ENCODE measurements at regions of chr6 and their contacts with region 1.

Region 1: DNA sequence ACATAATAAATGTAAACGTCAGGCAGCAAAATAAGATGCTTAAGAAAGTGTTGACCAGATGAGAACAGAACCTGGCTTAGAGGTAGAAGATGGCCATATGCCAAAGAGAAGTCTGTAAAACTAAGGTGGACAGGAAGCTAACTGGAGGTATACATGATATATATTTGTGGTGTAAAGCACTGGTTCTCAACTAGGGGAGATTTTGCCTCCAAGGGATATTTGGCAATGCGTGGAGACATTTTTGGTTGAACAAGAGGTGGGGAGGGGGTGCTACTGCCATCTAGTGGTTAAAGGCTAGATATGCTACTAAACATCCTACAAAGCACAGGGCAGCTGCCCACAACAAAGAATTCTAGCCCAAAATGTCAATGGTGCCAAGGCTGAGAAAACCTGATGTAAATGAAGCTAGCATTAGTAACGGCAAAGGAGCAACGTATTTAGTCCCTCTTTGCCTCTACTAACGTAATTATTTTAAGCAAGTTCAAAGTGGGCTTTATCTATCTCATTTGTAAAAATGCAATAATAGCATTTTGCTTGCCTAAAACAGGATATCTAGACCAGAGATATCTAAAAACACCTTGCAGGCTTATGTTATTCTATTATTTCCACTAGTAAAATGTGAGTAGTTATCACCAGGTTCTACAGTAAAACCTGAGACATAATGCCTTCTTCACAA is 182.6 kb downstream of the RNGTT start:
- DNase-seq: peak; percentile 85
- H3K4me3 Mint-ChIP-seq: no peak overlapping the region
- H3K27ac Mint-ChIP-seq: no peak overlapping the region
- H3K4me1 Mint-ChIP-seq: peaks cover 3% of the 10 kb centered on the region
- H3K27me3 Mint-ChIP-seq: no peaks in the 10 kb centered on the region

Region 2: DNA sequence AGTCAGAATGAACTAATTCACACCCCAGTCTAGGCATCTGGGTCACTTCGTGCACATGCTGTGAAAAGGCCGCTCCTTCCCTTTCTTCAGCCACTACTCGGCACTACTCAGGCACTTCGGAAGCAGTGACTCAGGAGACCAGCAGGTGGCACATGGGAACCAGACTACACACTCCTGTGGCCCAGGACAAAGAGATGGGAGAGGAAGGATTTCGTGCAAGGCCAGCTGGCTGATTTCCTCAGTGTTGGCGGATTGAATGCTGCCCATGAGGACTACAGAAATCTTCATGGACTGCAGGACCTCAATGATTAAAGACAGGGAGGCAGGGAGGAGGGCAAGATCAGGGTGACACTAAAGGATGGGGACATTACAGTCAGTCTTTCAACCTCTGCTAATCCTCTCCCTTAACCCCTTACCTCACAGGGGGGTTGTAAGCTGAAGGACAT is 851.0 kb before region 1 on chr6:
- intact Hi-C with region 1: loop called (anchors 2 kb)
- DNase-seq: peak; percentile 85
- H3K4me3 Mint-ChIP-seq: no peak overlapping the region
- H3K27ac Mint-ChIP-seq: no peak overlapping the region
- H3K4me1 Mint-ChIP-seq: no peaks in the 10 kb centered on the region
- H3K27me3 Mint-ChIP-seq: peaks cover 9% of the 10 kb centered on the region

Region 3: DNA sequence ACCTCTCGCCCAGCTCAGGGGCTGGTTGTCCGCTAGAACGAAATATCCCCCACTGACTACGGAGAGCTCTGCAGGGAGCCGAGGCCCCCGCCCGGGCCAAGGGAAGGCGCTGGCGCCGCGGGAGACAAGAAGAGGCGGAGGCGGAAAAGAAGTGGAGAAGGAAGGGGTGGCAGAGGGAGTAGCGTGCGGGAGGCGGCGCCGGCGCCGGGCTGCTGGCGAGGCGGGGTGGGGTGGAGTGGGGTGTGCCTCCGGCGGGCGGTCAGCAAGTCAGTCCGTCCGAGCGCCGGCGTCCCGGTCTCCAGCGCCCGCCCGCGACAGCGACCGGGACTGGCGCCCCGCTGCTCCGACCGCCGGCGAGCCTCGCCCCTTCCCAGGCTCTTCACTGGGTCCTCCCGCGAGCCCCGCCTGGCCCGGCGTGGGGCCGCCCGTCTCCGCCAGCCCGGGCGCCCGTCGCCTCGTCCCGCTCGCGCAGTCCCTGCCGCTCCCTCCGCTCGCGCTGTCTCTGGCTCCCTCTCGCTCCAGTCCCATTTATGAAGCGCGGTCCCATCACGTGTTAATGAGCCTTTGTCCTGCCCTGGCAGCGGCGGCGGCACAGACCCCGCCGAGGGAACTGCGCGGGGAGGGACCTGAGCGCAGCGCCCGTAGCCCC is 614.9 kb before region 1 on chr6 and contains the start of gene CNR1:
- intact Hi-C with region 1: loop called (anchors 10 kb)
- DNase-seq: peak; percentile 58
- H3K4me3 Mint-ChIP-seq: peak within 1 kb of the TSS; percentile 78
- H3K27ac Mint-ChIP-seq: peak within 1 kb of the TSS; percentile 18
- H3K4me1 Mint-ChIP-seq: peaks cover 9% of the 10 kb centered on the region
- H3K27me3 Mint-ChIP-seq: peaks cover 65% of the 10 kb centered on the region
- total RNA-seq, gene CNR1: not detected in 2 replicates